Activated CD4-positive, alpha-beta T cell treated with anti-CD3 and anti-CD28 coated beads, Interleukin-2, amount 10 ng/mL, durations not matched to agents 24 days and 14 days (primary cell): ENCODE measurements at regions of chr10 and their contacts with region 1.

Region 1: GRCh38 chr10:110354322-110354766 is 49.6 kb upstream of the SMNDC1 start:
- DNase-seq: peak; percentile 94
- H3K4me3 Mint-ChIP-seq: peak overlapping the region; percentile 89
- H3K27ac Mint-ChIP-seq: peak overlapping the region; percentile 99
- H3K4me1 Mint-ChIP-seq: peaks cover 65% of the 10 kb centered on the region
- H3K27me3 Mint-ChIP-seq: no peaks in the 10 kb centered on the region

Region 2: GRCh38 chr10:110137142-110137545 is 217.2 kb before region 1 on chr10:
- intact Hi-C with region 1: no loop called
- DNase-seq: peak; percentile 77
- H3K4me3 Mint-ChIP-seq: no peak overlapping the region
- H3K27ac Mint-ChIP-seq: peak overlapping the region; percentile 64
- H3K4me1 Mint-ChIP-seq: peaks cover 25% of the 10 kb centered on the region
- H3K27me3 Mint-ChIP-seq: no peaks in the 10 kb centered on the region

Region 3: GRCh38 chr10:110326351-110327032 is 27.9 kb before region 1 on chr10:
- intact Hi-C with region 1: loop called (anchors 1 kb)
- DNase-seq: no peak
- H3K4me3 Mint-ChIP-seq: peak overlapping the region; percentile 4
- H3K27ac Mint-ChIP-seq: peak overlapping the region; percentile 64
- H3K4me1 Mint-ChIP-seq: peaks cover 40% of the 10 kb centered on the region
- H3K27me3 Mint-ChIP-seq: no peaks in the 10 kb centered on the region

Region 4: DNA sequence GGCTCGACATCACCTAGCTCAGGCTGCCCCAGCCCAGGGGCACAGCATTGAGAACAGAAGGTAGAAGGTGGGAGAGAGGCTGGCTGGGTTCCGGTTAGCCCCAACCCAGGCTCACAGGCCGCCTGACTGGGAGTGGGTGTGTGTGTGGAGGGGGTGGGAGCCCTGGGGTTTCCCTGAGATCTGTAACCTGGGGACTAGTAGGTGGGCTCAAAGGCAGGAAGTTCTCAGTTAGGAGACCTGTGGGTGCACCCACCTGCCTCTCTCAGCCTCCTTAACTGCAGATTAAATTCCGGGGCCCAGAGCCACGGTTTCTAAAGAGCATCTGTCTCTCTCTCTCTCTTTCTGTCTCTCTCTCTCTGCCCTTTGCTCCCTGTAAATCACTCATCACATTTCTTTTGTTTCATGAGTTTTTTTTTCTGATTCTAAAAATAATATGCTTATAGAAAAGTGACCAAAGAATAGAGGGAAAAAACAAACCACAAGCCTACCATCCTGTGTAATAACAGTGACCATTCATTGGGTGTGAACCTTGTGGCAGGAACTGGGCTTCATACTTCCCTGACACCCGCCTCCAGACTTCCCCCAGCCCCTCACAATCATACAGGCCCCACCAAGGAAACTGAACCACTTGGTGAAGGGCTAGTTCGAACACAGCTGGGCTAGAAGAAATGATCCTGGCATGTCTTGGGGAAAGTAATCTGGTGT is 33.8 kb after region 1 on chr10:
- intact Hi-C with region 1: loop called (anchors 5 kb)
- DNase-seq: peak; percentile 71
- H3K4me3 Mint-ChIP-seq: peak overlapping the region; percentile 39
- H3K27ac Mint-ChIP-seq: peak overlapping the region; percentile 93
- H3K4me1 Mint-ChIP-seq: peaks cover 45% of the 10 kb centered on the region
- H3K27me3 Mint-ChIP-seq: no peaks in the 10 kb centered on the region

Region 5: GRCh38 chr10:110414563-110415309 is 60.4 kb after region 1 on chr10:
- intact Hi-C with region 1: loop called (anchors 1 kb)
- DNase-seq: peak; percentile 95
- H3K4me3 Mint-ChIP-seq: peak overlapping the region; percentile 39
- H3K27ac Mint-ChIP-seq: peak overlapping the region; percentile 94
- H3K4me1 Mint-ChIP-seq: peaks cover 62% of the 10 kb centered on the region
- H3K27me3 Mint-ChIP-seq: no peaks in the 10 kb centered on the region

Region 6: GRCh38 chr10:110497438-110498086 is 143.2 kb after region 1 on chr10 and contains the start of gene DUSP5:
- intact Hi-C with region 1: loop called (anchors 1 kb)
- DNase-seq: peak; percentile 99
- H3K4me3 Mint-ChIP-seq: peak within 1 kb of the TSS; percentile 99
- H3K27ac Mint-ChIP-seq: peak within 1 kb of the TSS; percentile 92
- H3K4me1 Mint-ChIP-seq: peaks cover 47% of the 10 kb centered on the region
- H3K27me3 Mint-ChIP-seq: no peaks in the 10 kb centered on the region
- total RNA-seq, gene DUSP5: 76.0 and 79.9 TPM in 2 replicates

Region 7: GRCh38 chr10:110535958-110536891 is 181.9 kb after region 1 on chr10:
- intact Hi-C with region 1: loop called (anchors 2 kb)
- DNase-seq: peak; percentile 85
- H3K4me3 Mint-ChIP-seq: peak overlapping the region; percentile 38
- H3K27ac Mint-ChIP-seq: peak overlapping the region; percentile 84
- H3K4me1 Mint-ChIP-seq: peaks cover 55% of the 10 kb centered on the region
- H3K27me3 Mint-ChIP-seq: no peaks in the 10 kb centered on the region

Region 8: DNA sequence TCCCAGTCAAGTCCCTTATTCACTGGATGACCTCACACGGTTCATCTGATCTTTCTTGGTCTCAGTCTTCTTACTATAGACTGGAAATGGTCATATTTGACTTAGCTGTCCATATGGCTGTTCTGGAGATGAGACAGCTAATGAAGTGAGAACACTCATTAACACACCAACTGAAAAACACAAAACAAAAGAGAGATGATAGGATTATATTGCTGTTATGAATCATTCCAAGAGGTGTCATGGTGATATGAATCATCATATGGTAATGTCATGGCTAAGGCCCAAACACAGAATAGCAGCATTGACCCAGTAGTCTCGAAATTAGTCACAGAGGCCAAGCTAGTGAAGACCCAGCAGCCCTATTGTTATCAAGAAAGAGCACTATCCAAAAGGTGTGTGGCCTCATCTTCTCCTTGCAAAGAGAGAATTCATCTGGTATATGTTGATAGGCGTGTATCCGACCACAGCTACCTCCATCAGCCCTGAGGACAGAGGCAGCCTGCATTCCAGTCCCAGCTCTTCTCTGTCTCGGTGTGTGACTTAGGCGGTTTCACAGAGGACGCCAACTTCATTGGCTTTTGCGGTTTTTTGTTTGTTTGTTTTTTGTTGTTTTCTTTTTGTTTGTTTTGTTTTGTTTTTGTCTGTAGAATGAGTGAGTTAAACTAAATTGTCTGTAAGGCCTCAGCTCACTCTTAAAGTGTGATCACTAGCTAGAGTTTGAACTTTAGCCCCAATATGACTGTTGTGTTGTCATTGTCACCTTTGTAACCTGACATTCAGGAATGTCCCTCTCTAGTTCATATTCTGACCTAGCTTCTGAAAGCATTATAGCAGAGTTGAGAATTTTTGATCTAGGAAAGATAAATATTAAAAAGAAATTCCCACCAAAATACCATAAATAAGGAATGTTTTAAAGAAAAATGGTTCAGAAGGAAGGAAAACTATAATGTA is 420.0 kb after region 1 on chr10:
- intact Hi-C with region 1: loop called (anchors 1 kb)
- DNase-seq: peak; percentile 83
- H3K4me3 Mint-ChIP-seq: peak overlapping the region; percentile 40
- H3K27ac Mint-ChIP-seq: peak overlapping the region; percentile 93
- H3K4me1 Mint-ChIP-seq: peaks cover 50% of the 10 kb centered on the region
- H3K27me3 Mint-ChIP-seq: peaks cover 3% of the 10 kb centered on the region